Mucosa of descending colon (tissue), 3 donors: ENCODE measurements at regions of chr5 and their contacts with region 1.

Region 1: DNA sequence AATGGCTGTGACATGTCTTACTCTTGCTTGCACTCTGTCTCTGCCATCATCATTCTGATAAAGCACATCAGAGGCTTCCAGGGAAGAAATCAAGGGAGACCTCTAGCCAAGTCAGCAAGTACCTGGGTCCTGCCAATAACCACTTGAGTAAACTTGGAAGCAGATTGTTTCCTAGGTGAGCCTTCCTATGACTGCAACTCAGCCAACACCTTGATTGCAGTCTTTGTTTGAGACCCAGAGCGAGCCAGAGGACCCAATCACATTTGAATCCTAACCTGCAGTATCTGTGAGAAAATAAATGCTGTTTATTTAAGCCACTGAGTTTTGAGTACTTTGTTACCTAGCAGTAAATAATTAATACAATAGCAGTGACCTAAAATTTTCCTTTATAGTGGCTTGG is 356.8 kb upstream of the CHD1 start:
- DNase-seq: no peak
- ATAC-seq: no peak
- H3K4me3 ChIP-seq: no peak overlapping the region
- H3K4me1 ChIP-seq: no peaks in the 10 kb centered on the region
- CTCF ChIP-seq: no peak

Region 2: DNA sequence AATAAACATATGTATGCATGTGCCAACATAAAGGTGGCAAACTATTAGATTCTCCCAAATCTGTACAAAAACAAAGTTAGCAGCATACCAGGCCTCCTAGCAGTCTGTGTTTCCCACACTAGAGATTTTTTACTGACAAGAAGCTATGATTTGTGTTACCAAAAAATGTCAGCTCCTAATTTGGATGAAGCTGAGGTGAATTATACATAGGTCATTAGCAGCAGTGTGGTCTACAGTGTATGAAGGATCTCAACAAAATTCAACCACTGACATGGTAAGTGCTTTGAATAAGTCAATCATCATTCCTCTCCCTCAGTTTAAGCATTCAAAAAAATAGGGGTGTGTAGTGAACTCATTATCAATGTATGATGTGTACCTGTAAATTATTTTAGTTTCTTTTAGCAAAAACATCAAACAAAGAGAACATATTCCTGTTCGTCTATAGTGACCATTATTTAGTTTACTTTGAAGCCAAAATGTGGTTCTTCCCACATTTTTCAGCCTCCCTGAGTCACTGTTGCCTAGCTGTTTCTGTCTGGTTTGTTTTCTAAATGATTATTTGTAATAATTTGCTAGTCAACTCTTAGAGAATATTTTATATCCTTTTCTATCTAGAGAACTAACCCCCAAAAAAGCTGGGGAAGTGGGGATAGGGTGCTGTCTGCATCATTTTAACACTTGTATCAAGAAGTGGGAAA is 564.2 kb before region 1 on chr5:
- intact Hi-C with region 1: no loop called
- DNase-seq: no peak
- ATAC-seq: no peak
- H3K4me3 ChIP-seq: no peak overlapping the region
- H3K4me1 ChIP-seq: no peaks in the 10 kb centered on the region
- CTCF ChIP-seq: no peak

Region 3: DNA sequence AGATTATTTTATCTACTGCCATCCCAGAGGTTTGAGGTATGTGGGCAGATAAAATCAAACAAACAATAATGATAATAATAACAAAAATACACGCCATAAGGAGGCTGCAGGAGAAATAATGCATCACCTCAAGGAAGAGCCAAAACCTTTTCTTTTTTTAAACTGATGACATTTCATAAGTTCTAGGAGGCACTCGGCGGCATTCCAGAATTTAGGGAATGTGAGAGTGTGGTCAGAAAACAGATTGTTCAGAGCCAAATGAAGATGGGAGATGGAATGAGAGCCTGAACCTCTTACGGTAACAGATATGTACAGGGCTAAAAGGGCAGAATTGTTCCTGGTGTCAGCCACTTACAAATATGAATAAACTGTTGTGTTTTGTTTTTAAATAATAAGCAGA is 258.2 kb after region 1 on chr5:
- intact Hi-C with region 1: loop called in 1 of 2 experiments (anchors 10 kb)
- DNase-seq: no peak
- ATAC-seq: no peak
- H3K4me3 ChIP-seq: no peak overlapping the region
- H3K4me1 ChIP-seq: no peaks in the 10 kb centered on the region
- CTCF ChIP-seq: no peak

Region 4: GRCh38 chr5:99651296-99651695 is 365.7 kb after region 1 on chr5:
- intact Hi-C with region 1: no loop called
- DNase-seq: no peak
- ATAC-seq: no peak
- H3K4me3 ChIP-seq: no peak overlapping the region
- H3K4me1 ChIP-seq: no peaks in the 10 kb centered on the region
- CTCF ChIP-seq: no peak